Endothelial cell of umbilical vein (primary cell): ENCODE measurements at regions of chr3 and their contacts with region 1.

Region 1: DNA sequence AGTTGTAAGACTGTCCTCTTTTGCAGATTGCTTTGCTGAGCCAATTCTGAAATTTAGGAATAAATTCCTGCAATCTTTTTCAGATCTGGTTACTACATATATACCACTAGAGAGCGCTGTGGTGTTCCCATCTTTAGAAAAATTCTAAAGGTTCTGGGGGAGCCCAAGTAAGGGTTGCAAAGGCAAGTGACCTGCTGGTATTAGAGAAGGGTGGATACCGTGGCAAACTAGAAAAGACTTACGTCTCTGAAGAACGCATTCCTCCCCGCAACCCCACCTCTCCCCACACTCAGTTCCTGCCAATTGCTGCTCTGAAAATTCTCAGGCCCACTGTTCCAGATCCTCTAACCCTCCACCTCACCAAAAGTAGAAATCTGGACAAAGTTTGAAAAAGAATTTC is 48.5 kb downstream of the EFHB start:
- DNase-seq: peak; percentile 47
- H3K4me3 ChIP-seq: no peak overlapping the region
- H3K27ac ChIP-seq: no peak overlapping the region
- H3K4me1 ChIP-seq: peaks cover 20% of the 10 kb centered on the region
- H3K27me3 ChIP-seq: no peaks in the 10 kb centered on the region
- CTCF ChIP-seq: peak; percentile 46 to 51
- POLR2A ChIP-seq: no peak

Region 2: GRCh38 chr3:19738846-19739245 is 146.6 kb before region 1 on chr3:
- CTCF ChIA-PET with region 1: no interaction called
- POLR2A ChIA-PET with region 1: no interaction called
- dilution Hi-C with region 1: no loop called
- intact Hi-C with region 1: no loop called
- DNase-seq: no peak
- H3K4me3 ChIP-seq: no peak overlapping the region
- H3K27ac ChIP-seq: no peak overlapping the region
- H3K4me1 ChIP-seq: no peaks in the 10 kb centered on the region
- H3K27me3 ChIP-seq: no peaks in the 10 kb centered on the region
- CTCF ChIP-seq: no peak
- POLR2A ChIP-seq: no peak

Region 3: DNA sequence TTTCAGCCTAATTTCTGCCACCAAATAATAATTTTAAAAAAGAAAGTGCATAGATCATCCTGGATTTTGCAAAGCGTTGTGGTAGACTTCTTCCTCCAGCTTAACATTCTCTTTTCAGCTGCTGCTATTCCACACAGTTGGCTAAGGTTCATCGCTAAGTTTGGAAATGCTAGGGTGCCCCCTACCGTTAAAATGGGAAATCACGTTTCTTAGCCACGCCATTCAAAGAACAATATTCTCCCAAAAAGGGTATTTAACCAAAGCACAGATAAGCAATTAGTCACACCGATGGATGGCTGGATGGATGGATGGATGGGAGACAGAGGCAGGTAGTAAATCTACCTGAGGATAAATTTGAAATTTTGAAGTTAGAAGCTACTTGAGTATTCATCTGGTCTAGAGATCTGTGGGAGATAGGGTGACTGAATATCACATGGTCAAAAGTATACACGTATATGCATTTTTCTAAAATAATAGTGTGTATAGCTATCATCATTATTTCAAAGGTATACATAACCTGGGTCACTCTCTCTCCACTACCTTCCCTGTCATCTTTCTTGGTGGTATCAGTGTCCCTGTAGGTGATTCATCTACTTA is 18.6 kb before region 1 on chr3:
- CTCF ChIA-PET with region 1: interaction called, 18 read pairs
- POLR2A ChIA-PET with region 1: no interaction called
- dilution Hi-C with region 1: no loop called
- intact Hi-C with region 1: no loop called
- DNase-seq: peak; percentile 63
- H3K4me3 ChIP-seq: no peak overlapping the region
- H3K27ac ChIP-seq: no peak overlapping the region
- H3K4me1 ChIP-seq: no peaks in the 10 kb centered on the region
- H3K27me3 ChIP-seq: peaks cover 0 to 3% of the 10 kb centered on the region in 2 experiments
- CTCF ChIP-seq: peak; percentile 65 to 70
- POLR2A ChIP-seq: no peak

Region 4: DNA sequence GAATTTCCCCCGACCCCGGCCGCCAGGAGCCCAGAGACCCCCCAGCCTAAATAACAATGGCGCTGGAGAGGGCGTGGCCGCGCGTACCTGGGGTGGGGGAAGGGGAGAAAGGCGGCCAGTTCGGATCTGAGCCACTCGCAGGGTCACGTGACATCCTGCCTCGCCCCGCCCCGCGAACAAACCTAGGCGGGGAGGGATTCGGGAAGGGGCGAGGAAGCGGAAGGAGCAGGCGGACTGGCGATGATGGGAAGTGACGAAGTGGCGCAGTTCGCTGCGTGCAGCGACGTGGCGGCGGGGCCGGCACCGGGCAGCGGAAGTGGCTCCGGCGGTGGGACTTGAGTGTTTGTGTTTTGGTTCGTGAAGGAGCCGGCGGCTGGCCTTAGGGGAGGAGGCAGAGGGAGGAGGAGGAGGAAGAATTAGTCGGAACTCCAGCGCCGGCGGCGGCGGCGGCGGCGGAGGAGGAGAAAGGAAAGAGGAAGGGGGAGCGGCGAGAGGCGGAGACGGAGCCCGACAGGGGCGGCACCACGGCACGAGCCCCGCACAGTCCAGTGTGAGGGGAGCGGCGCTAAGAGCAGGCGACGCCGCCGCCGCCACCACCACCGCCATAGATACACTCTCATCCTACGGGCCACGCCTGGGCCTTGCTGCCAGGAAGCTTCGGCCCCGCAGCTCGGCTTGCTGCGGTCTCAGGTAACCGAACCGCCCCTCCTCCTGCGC is 61.5 kb after region 1 on chr3 and contains the start of gene RAB5A:
- CTCF ChIA-PET with region 1: interaction called, 6 read pairs
- POLR2A ChIA-PET with region 1: interaction called, 3 read pairs
- dilution Hi-C with region 1: no loop called
- intact Hi-C with region 1: loop called (anchors 1 kb)
- DNase-seq: peak; percentile 99
- H3K4me3 ChIP-seq: peak within 1 kb of the TSS; percentile 88 to 100 (median 93)
- H3K27ac ChIP-seq: peak within 1 kb of the TSS; percentile 97
- H3K4me1 ChIP-seq: peaks cover 23% of the 10 kb centered on the region
- H3K27me3 ChIP-seq: no peaks in the 10 kb centered on the region
- CTCF ChIP-seq: no peak
- POLR2A ChIP-seq: peak; percentile 80
- total RNA-seq, gene RAB5A: 63.8 and 66.9 TPM in 2 replicates

Region 5: DNA sequence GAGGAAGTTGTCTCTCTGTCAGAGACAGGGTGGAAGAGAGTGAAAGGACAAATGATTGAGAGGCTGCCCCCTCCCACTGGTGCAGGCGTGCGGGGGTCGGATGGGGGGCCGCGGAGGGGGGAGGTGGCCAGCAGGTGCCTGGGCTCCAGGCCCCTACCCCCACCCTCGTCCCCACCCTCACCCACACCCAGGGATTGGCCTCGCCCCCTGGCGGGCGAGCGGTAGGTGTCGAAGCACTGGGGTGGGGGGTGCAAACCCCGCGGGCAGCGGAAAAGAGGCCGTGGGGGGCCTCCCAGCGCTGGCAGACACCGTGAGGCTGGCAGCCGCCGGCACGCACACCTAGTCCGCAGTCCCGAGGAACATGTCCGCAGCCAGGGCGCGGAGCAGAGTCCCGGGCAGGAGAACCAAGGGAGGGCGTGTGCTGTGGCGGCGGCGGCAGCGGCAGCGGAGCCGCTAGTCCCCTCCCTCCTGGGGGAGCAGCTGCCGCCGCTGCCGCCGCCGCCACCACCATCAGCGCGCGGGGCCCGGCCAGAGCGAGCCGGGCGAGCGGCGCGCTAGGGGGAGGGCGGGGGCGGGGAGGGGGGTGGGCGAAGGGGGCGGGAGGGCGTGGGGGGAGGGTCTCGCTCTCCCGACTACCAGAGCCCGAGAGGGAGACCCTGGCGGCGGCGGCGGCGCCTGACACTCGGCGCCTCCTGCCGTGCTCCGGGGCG is 154.5 kb after region 1 on chr3 and contains the start of gene KAT2B:
- CTCF ChIA-PET with region 1: interaction called, 7 read pairs
- POLR2A ChIA-PET with region 1: no interaction called
- dilution Hi-C with region 1: no loop called
- intact Hi-C with region 1: loop called (anchors 1 kb)
- DNase-seq: peak; percentile 79
- H3K4me3 ChIP-seq: peak within 1 kb of the TSS; percentile 55 to 95 (median 94)
- H3K27ac ChIP-seq: peak within 1 kb of the TSS; percentile 42
- H3K4me1 ChIP-seq: peaks cover 16% of the 10 kb centered on the region
- H3K27me3 ChIP-seq: no peaks in the 10 kb centered on the region
- CTCF ChIP-seq: peak; percentile 35 to 77
- POLR2A ChIP-seq: no peak
- total RNA-seq, gene KAT2B: 9.7 and 11.0 TPM in 2 replicates

Region 6: GRCh38 chr3:20185701-20186598 is 300.5 kb after region 1 on chr3 and contains the start of gene SGO1:
- CTCF ChIA-PET with region 1: interaction called, 4 read pairs
- POLR2A ChIA-PET with region 1: no interaction called
- dilution Hi-C with region 1: no loop called
- intact Hi-C with region 1: loop called (anchors 1 kb)
- DNase-seq: peak; percentile 98
- H3K4me3 ChIP-seq: peak within 1 kb of the TSS; percentile 90 to 93 (median 91)
- H3K27ac ChIP-seq: peak within 1 kb of the TSS; percentile 85
- H3K4me1 ChIP-seq: peaks cover 21% of the 10 kb centered on the region
- H3K27me3 ChIP-seq: no peaks in the 10 kb centered on the region
- CTCF ChIP-seq: no peak
- POLR2A ChIP-seq: peak; percentile 91
- total RNA-seq, gene SGO1: 15.5 and 21.7 TPM in 2 replicates